ENCODE measurements at regions of chr5 and their contacts with region 1.

Region 1: GRCh38 chr5:43019614-43020293 is 20.4 kb downstream of the ANXA2R start:
- DNase-seq: peak; percentile 94
- ATAC-seq: peak; percentile 63
- H3K4me3 ChIP-seq: peak overlapping the region; percentile 63 to 99 (median 80)
- H3K4me3 Mint-ChIP-seq: peak overlapping the region; percentile 99
- H3K27ac ChIP-seq: peak overlapping the region; percentile 96 to 98
- H3K27ac Mint-ChIP-seq: peak overlapping the region; percentile 100
- H3K4me1 ChIP-seq: peaks cover 25 to 32% of the 10 kb centered on the region in 2 donors
- H3K4me1 Mint-ChIP-seq: peaks cover 42% of the 10 kb centered on the region
- H3K27me3 ChIP-seq: no peaks in the 10 kb centered on the region
- H3K27me3 Mint-ChIP-seq: no peaks in the 10 kb centered on the region
- CTCF ChIP-seq: peak; percentile 77

Region 2: DNA sequence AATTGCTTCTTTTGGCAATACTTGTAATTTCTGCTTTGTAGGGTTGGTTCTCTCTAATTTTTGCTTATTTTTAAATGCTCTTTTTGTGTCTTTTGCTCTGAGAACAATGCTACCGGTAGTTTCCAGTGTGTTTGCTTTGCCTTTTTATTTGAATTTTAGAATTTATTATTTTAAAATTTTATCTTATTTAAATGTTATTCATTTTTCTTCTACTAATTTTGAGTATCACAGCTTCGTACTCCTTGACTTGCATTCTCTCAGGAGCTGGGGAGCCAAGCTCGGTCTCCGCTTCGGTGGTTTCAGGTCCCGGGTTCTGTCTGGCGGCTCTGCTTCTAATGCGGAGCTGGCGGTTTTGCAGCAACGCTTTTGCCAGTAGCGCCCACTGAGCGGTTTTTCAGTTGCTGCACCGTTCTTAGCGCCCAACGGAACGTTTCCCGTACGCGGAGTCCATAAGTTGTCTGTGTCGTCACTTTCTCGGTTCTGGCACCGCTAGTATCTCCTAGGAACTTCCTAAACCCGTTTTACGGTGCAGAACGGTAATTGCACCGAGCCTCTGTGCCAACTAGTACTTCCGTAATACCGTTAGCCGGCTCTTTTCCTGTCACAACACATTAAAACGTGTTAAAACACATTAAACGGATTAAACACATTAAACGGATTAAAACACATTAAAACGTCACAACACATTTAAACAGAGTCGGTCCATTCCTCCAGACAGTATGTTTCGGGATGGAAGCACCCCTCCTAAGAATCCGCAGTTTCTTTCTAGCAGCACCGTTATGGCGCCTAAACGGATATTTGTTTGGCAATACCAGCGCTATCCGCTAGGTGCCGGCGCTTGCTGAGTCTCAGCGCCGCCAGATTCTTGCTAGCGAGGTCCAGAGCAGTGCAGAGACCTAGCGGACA is 25.3 kb before region 1 on chr5:
- CTCF ChIA-PET with region 1: interaction called, 169 read pairs
- POLR2A ChIA-PET with region 1: interaction called, 171 read pairs
- intact Hi-C with region 1: loop called (anchors 1 kb)
- DNase-seq: peak; percentile 94
- ATAC-seq: peak; percentile 67
- H3K4me3 ChIP-seq: peak overlapping the region; percentile 78 to 97 (median 89)
- H3K4me3 Mint-ChIP-seq: peak overlapping the region; percentile 96
- H3K27ac ChIP-seq: peak overlapping the region; percentile 93 to 96
- H3K27ac Mint-ChIP-seq: peak overlapping the region; percentile 100
- H3K4me1 ChIP-seq: peaks cover 23 to 30% of the 10 kb centered on the region in 2 donors
- H3K4me1 Mint-ChIP-seq: peaks cover 32% of the 10 kb centered on the region
- H3K27me3 ChIP-seq: peaks cover 0 to 9% (median 1%) of the 10 kb centered on the region in 4 experiments
- H3K27me3 Mint-ChIP-seq: no peaks in the 10 kb centered on the region
- CTCF ChIP-seq: peak; percentile 84

Region 3: GRCh38 chr5:43000111-43000845 is 19.5 kb before region 1 on chr5:
- CTCF ChIA-PET with region 1: interaction called, 169 read pairs
- POLR2A ChIA-PET with region 1: interaction called, 184 read pairs
- intact Hi-C with region 1: loop called (anchors 1 kb)
- DNase-seq: no peak
- ATAC-seq: no peak
- H3K4me3 ChIP-seq: peak overlapping the region in 1 of 5 experiments; percentile 7
- H3K4me3 Mint-ChIP-seq: peak overlapping the region; percentile 44
- H3K27ac ChIP-seq: no peak overlapping the region
- H3K27ac Mint-ChIP-seq: no peak overlapping the region
- H3K4me1 ChIP-seq: peaks cover 12 to 16% of the 10 kb centered on the region in 2 donors
- H3K4me1 Mint-ChIP-seq: peaks cover 12% of the 10 kb centered on the region
- H3K27me3 ChIP-seq: peaks cover 0 to 25% (median 12%) of the 10 kb centered on the region in 4 experiments
- H3K27me3 Mint-ChIP-seq: peaks cover 20% of the 10 kb centered on the region
- CTCF ChIP-seq: no peak

Region 4: DNA sequence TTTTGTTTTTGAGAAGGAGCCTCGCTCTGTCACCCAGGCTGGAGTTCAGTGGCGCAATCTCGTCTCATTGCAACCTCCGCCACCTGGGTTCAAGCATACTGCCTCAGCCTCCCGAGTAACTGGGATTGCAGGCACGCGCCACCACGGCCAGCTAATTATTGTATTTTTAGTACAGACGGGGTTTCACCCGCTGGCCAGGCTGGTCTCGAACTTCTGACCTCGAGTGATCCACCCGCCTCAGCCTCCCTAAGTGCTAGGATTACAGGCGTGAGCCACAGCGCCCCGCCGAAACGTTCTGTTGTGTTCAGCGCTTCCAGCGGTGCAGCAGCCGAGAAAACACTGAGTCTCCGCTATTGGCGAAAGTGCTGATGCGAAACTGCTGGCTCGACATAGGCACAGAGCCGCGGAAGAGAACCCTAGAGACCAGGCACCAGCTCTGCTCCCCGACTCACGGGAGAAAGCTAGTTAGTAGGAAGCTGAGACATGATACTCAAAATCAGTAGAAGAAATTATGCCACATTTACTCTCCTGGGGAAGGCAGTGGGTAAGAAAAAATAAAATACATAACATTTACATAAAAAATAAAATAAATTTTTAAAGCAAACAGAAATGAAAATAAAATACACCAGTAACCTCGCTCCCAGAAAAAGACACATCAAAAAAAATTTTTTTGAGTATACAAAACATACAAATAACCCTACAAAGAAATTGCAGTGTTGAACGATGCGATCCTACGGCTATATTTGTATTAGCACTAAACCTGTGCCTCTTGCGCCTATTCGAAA is 11.2 kb before region 1 on chr5:
- CTCF ChIA-PET with region 1: interaction called, 127 read pairs
- POLR2A ChIA-PET with region 1: interaction called, 184 read pairs
- intact Hi-C with region 1: loop called (anchors 1 kb)
- DNase-seq: peak; percentile 95
- ATAC-seq: peak; percentile 58
- H3K4me3 ChIP-seq: peak overlapping the region; percentile 69 to 99 (median 76)
- H3K4me3 Mint-ChIP-seq: peak overlapping the region; percentile 89
- H3K27ac ChIP-seq: peak overlapping the region; percentile 83 to 97
- H3K27ac Mint-ChIP-seq: peak overlapping the region; percentile 98
- H3K4me1 ChIP-seq: peaks cover 20 to 38% of the 10 kb centered on the region in 2 donors
- H3K4me1 Mint-ChIP-seq: peaks cover 31% of the 10 kb centered on the region
- H3K27me3 ChIP-seq: no peaks in the 10 kb centered on the region
- H3K27me3 Mint-ChIP-seq: no peaks in the 10 kb centered on the region
- CTCF ChIP-seq: peak; percentile 36

Region 5: GRCh38 chr5:43040287-43041098 is 20.7 kb after region 1 on chr5 and contains the start of gene ANXA2R:
- CTCF ChIA-PET with region 1: interaction called, 138 read pairs
- POLR2A ChIA-PET with region 1: interaction called, 202 read pairs
- intact Hi-C with region 1: loop called (anchors 1 kb)
- DNase-seq: peak; percentile 97
- ATAC-seq: peak; percentile 60
- H3K4me3 ChIP-seq: peak within 1 kb of the TSS; percentile 62 to 95 (median 81)
- H3K4me3 Mint-ChIP-seq: peak within 1 kb of the TSS; percentile 97
- H3K27ac ChIP-seq: peak within 1 kb of the TSS; percentile 98 to 99
- H3K27ac Mint-ChIP-seq: peak within 1 kb of the TSS; percentile 98
- H3K4me1 ChIP-seq: peaks cover 25 to 44% of the 10 kb centered on the region in 2 donors
- H3K4me1 Mint-ChIP-seq: peaks cover 39% of the 10 kb centered on the region
- H3K27me3 ChIP-seq: no peaks in the 10 kb centered on the region
- H3K27me3 Mint-ChIP-seq: no peaks in the 10 kb centered on the region
- CTCF ChIP-seq: peak; percentile 86
- total RNA-seq, gene ANXA2R: 19.3 and 20.0 TPM in 2 replicates